CD8-positive, alpha-beta T cell (primary cell): ENCODE measurements at regions of chr19 and their contacts with region 1.

Region 1: DNA sequence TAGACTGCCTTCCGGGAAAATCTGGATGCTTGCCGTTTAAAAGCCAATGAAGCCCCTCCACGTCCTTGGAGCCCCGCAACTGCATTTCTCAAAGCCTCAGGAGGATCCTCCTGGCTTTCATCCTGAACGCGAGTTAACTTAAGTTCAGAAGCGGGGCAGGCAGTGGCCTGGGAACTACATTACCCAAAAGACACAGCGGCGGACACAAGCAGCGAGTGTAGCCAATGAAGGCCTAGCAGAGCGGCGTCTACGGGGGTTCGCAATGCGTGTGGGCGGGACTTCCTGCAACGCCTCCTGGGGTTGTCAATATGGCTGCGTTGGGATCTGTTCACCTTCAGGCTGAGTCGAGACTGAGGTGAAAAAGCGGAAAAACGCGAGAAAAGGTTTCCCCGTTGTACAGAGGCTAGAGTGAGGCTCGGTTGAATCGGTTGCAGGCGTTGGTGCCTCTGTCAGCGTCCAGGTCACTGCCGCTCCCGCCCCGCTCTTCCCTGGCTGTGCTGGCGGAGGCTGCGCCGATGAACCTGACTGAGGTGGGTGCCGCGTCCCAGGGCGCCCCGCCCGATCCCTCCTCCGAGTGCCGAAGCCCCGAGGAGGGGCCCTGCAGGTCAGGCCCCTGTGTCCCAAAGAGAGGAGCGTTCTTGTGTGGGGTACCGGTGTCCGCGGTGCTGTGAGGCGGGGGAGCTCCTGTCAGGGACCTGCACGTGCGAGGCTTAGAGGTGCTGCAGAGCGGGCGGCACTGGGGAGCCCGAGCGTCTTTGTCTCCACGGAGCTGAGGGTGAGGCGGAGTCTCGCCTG is at the start of gene ZNF17:
- DNase-seq: peak; percentile 83 to 96 (median 91)
- ATAC-seq: peak; percentile 100
- H3K4me3 ChIP-seq: peak within 1 kb of the TSS; percentile 82 to 99
- H3K4me3 Mint-ChIP-seq: peak within 1 kb of the TSS; percentile 96
- H3K27ac ChIP-seq: peak within 1 kb of the TSS; percentile 67 to 83
- H3K27ac Mint-ChIP-seq: peak within 1 kb of the TSS; percentile 94
- H3K4me1 ChIP-seq: peaks cover 13% of the 10 kb centered on the region
- H3K4me1 Mint-ChIP-seq: peaks cover 35% of the 10 kb centered on the region
- H3K27me3 ChIP-seq: no peaks in the 10 kb centered on the region
- H3K27me3 Mint-ChIP-seq: no peaks in the 10 kb centered on the region
- CTCF ChIP-seq: no peak
- total RNA-seq, gene ZNF17: 15.5 to 18.3 TPM

Region 2: DNA sequence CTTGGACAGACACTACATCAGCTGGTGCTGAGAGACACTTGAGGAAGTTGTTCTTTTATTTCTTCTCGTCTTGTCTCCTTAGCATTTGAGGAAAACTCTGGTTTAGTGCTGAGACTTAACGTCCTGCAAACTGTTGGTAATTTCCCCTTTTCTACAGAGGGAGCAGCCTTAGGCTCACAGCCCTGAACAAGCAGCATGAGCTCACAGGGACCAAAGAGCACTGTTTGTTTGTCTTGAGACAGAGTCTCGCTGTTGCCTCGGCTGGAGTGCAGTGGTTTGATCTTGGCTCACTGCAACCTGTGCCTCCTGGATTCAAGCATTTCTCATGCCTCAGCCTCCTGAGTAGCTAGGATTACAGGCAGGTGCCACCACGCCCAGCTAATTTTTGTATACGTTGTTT is 165.1 kb before region 1 on chr19:
- CTCF ChIA-PET with region 1: no interaction called
- POLR2A ChIA-PET with region 1: no interaction called
- intact Hi-C with region 1: no loop called
- DNase-seq: no peak
- ATAC-seq: no peak
- H3K4me3 ChIP-seq: no peak overlapping the region
- H3K4me3 Mint-ChIP-seq: no peak overlapping the region
- H3K27ac ChIP-seq: no peak overlapping the region
- H3K27ac Mint-ChIP-seq: no peak overlapping the region
- H3K4me1 ChIP-seq: peaks cover 15% of the 10 kb centered on the region
- H3K4me1 Mint-ChIP-seq: peaks cover 39% of the 10 kb centered on the region
- H3K27me3 ChIP-seq: no peaks in the 10 kb centered on the region
- H3K27me3 Mint-ChIP-seq: no peaks in the 10 kb centered on the region
- CTCF ChIP-seq: no peak

Region 3: GRCh38 chr19:57350877-57351805 is 59.9 kb before region 1 on chr19 and contains the start of gene ZNF304:
- CTCF ChIA-PET with region 1: no interaction called
- POLR2A ChIA-PET with region 1: no interaction called
- intact Hi-C with region 1: loop called in 1 of 2 experiments (anchors 2 kb)
- DNase-seq: peak; percentile 58 to 93 (median 81)
- ATAC-seq: peak; percentile 99
- H3K4me3 ChIP-seq: peak within 1 kb of the TSS; percentile 79 to 87
- H3K4me3 Mint-ChIP-seq: peak within 1 kb of the TSS; percentile 96
- H3K27ac ChIP-seq: peak within 1 kb of the TSS; percentile 68 to 73
- H3K27ac Mint-ChIP-seq: peak within 1 kb of the TSS; percentile 93
- H3K4me1 ChIP-seq: peaks cover 13% of the 10 kb centered on the region
- H3K4me1 Mint-ChIP-seq: peaks cover 32% of the 10 kb centered on the region
- H3K27me3 ChIP-seq: peaks cover 0 to 4% of the 10 kb centered on the region in 2 experiments
- H3K27me3 Mint-ChIP-seq: no peaks in the 10 kb centered on the region
- CTCF ChIP-seq: no peak
- total RNA-seq, gene ZNF304: 8.6 TPM

Region 4: GRCh38 chr19:57477191-57478008 is 66.3 kb after region 1 on chr19 and contains the start of gene ZNF772:
- CTCF ChIA-PET with region 1: no interaction called
- POLR2A ChIA-PET with region 1: no interaction called
- intact Hi-C with region 1: loop called in 1 of 2 experiments (anchors 1 kb)
- DNase-seq: peak; percentile 76 to 95 (median 88)
- ATAC-seq: peak; percentile 99
- H3K4me3 ChIP-seq: peak within 1 kb of the TSS; percentile 78 to 86
- H3K4me3 Mint-ChIP-seq: peak within 1 kb of the TSS; percentile 88
- H3K27ac ChIP-seq: peak within 1 kb of the TSS; percentile 47 to 83
- H3K27ac Mint-ChIP-seq: peak within 1 kb of the TSS; percentile 92
- H3K4me1 ChIP-seq: peaks cover 8% of the 10 kb centered on the region
- H3K4me1 Mint-ChIP-seq: peaks cover 14% of the 10 kb centered on the region
- H3K27me3 ChIP-seq: peaks cover 0 to 2% of the 10 kb centered on the region in 2 experiments
- H3K27me3 Mint-ChIP-seq: peaks cover 2% of the 10 kb centered on the region
- CTCF ChIP-seq: peak; percentile 65
- total RNA-seq, gene ZNF772: 0.41 to 0.97 TPM

Region 5: DNA sequence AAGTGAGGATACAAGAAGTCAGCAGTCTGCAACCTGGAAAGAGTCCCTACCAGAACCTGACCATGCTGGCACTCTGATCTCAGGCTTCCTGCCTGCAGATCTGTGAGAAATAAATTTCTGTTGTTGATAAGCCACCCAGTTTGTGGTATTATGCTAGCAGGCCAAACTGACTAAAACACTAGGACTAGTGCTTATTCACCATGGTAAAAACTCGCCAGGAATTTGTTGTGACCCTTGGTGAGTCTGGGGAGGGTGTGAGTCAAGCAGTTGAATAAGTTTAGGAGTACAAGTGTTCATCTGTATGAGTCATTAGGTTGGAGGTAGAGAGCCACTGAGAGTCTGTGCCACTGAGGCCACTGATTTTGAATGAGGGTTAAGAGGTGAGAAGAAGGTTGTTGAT is 176.5 kb after region 1 on chr19:
- CTCF ChIA-PET with region 1: no interaction called
- POLR2A ChIA-PET with region 1: no interaction called
- intact Hi-C with region 1: no loop called
- DNase-seq: no peak
- ATAC-seq: no peak
- H3K4me3 ChIP-seq: no peak overlapping the region
- H3K4me3 Mint-ChIP-seq: no peak overlapping the region
- H3K27ac ChIP-seq: no peak overlapping the region
- H3K27ac Mint-ChIP-seq: no peak overlapping the region
- H3K4me1 ChIP-seq: peaks cover 14% of the 10 kb centered on the region
- H3K4me1 Mint-ChIP-seq: peaks cover 15% of the 10 kb centered on the region
- H3K27me3 ChIP-seq: no peaks in the 10 kb centered on the region
- H3K27me3 Mint-ChIP-seq: no peaks in the 10 kb centered on the region
- CTCF ChIP-seq: no peak

Region 6: DNA sequence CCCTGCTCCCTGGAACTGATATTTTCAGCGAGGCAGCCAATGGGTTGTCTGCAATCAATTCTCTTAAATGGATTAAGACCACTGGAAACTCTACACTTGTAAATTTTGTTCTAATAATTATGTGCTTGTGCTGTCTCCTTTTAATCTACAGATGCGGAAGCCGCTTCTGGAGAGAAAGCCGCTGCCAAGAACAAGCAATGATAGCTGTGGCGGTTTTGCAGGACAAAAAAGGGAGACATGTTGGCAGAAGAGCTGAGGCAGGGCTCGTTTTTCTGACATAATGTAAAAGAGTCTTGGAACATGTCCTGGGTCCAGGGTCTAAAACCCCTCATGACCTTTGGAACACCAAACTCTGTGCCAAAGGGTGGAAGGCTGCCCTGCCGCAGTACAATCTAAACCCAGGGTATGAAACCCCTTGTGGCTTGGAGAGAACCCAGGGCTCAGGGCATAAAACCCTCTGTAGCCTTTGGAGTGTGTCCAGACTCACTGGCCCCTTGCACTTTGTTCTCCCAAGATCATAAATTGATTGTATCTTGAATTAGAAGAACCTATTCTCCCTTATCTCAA is 492.6 kb after region 1 on chr19:
- CTCF ChIA-PET with region 1: no interaction called
- POLR2A ChIA-PET with region 1: no interaction called
- intact Hi-C with region 1: loop called (anchors 5 to 10 kb)
- DNase-seq: no peak
- ATAC-seq: no peak
- H3K4me3 ChIP-seq: no peak overlapping the region
- H3K4me3 Mint-ChIP-seq: no peak overlapping the region
- H3K27ac ChIP-seq: no peak overlapping the region
- H3K27ac Mint-ChIP-seq: no peak overlapping the region
- H3K4me1 ChIP-seq: no peaks in the 10 kb centered on the region
- H3K4me1 Mint-ChIP-seq: peaks cover 4% of the 10 kb centered on the region
- H3K27me3 ChIP-seq: no peaks in the 10 kb centered on the region
- H3K27me3 Mint-ChIP-seq: no peaks in the 10 kb centered on the region
- CTCF ChIP-seq: peak; percentile 34